Right cardiac atrium (tissue), 5 donors: ENCODE measurements at regions of chr10 and their contacts with region 1.

Region 1: DNA sequence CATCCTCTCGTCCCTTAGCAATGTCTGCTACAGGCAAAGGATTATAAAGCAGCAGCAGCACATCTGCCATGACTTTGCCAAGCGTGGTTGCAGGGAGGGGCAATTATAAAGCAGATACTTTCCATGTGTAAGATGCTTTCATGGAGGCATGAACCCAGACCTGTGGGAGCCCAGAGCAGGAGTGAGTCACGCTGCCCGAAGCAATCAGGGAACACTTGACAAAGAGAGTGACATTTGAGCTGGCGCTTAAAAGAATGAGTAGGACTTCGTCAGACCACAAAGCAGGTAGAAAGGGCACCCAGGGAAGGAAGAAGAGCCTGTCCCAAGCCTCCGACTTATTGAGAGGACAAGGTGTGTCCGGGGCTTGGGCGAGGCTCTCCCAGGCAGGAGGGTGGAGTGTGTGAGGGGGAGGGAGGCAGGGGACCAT is 147.2 kb downstream of the MYOF start:
- DNase-seq: no peak
- ATAC-seq: peak in 1 of 2 donors; percentile 55
- H3K4me3 ChIP-seq: no peak overlapping the region
- H3K27ac ChIP-seq: no peak overlapping the region
- H3K4me1 ChIP-seq: no peaks in the 10 kb centered on the region
- H3K27me3 ChIP-seq: no peaks in the 10 kb centered on the region

Region 2: DNA sequence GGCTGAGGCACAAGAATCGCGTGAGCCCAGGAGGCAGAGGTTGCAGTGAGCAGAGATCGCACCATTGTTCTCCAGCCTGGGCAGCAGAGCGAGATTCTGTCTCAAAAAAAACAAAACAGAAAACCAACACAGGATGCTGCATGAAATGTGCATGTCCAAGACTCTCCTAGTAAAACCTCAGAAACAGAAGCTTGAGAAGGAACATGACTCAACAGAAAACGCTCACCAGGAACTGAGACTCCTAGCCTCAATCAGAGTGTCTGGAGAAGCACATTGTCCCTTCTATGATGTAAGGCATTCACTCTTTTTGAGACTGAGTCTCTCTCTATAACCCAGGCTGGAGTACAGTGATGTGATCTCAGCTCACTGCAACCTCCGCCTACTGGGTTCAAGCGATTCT is 21.1 kb before region 1 on chr10:
- intact Hi-C with region 1: loop called in 1 of 4 experiments (anchors 2 kb)
- DNase-seq: no peak
- ATAC-seq: no peak
- H3K4me3 ChIP-seq: no peak overlapping the region
- H3K27ac ChIP-seq: no peak overlapping the region
- H3K4me1 ChIP-seq: no peaks in the 10 kb centered on the region
- H3K27me3 ChIP-seq: no peaks in the 10 kb centered on the region